MCF 10A (cell line): ENCODE measurements at regions of chr10 and their contacts with region 1.

Region 1: GRCh38 chr10:19930936-19931893 is 115.0 kb downstream of the PLXDC2 start:
- DNase-seq: peak; percentile 66
- H3K4me3 Mint-ChIP-seq: peak overlapping the region; percentile 28
- H3K27ac Mint-ChIP-seq: peak overlapping the region; percentile 80
- H3K4me1 Mint-ChIP-seq: peaks cover 45% of the 10 kb centered on the region
- H3K27me3 Mint-ChIP-seq: no peaks in the 10 kb centered on the region
- CTCF ChIP-seq: no peak

Region 2: DNA sequence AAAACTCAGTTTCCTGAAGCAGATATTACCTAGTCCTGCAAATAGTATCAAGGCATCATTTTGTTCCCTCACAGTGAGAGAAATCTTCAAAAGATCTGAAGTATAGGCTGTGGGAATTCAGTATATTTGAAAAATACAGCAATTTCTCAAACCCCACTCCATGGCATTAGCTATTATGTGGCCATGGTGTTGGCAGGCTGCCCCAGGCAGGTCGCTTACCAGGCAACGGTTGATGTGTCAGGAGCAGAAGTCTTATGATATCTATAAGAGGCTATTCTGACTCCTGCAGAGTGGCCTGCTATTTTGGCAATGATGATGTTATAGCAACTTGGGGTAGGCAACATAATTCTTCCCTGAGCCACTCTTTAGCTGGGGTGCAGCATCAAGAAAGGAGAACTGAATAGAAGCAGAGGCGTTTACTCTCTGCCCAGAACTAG is 72.9 kb after region 1 on chr10:
- CTCF ChIA-PET with region 1: no interaction called
- POLR2A ChIA-PET with region 1: interaction called, 15 read pairs
- intact Hi-C with region 1: loop called (anchors 10 kb)
- DNase-seq: peak; percentile 52
- H3K4me3 Mint-ChIP-seq: peak overlapping the region; percentile 54
- H3K27ac Mint-ChIP-seq: peak overlapping the region; percentile 91
- H3K4me1 Mint-ChIP-seq: peaks cover 27% of the 10 kb centered on the region
- H3K27me3 Mint-ChIP-seq: no peaks in the 10 kb centered on the region
- CTCF ChIP-seq: no peak